Activated CD4-positive, alpha-beta T cell treated with anti-CD3 and anti-CD28 coated beads, Interleukin-2, amount 10 ng/mL, durations not matched to agents 24 days and 14 days (primary cell): ENCODE measurements at regions of chr16 and their contacts with region 1.

Region 1: GRCh38 chr16:68510775-68511174 is 28.3 kb upstream of the ZFP90 start:
- DNase-seq: no peak
- H3K4me3 Mint-ChIP-seq: no peak overlapping the region
- H3K27ac Mint-ChIP-seq: no peak overlapping the region
- H3K4me1 Mint-ChIP-seq: peaks cover 2% of the 10 kb centered on the region
- H3K27me3 Mint-ChIP-seq: peaks cover 30% of the 10 kb centered on the region

Region 2: GRCh38 chr16:68396481-68396880 is 114.3 kb before region 1 on chr16:
- intact Hi-C with region 1: loop called (anchors 1 kb)
- DNase-seq: peak; percentile 87
- H3K4me3 Mint-ChIP-seq: no peak overlapping the region
- H3K27ac Mint-ChIP-seq: no peak overlapping the region
- H3K4me1 Mint-ChIP-seq: peaks cover 16% of the 10 kb centered on the region
- H3K27me3 Mint-ChIP-seq: peaks cover 20% of the 10 kb centered on the region

Region 3: DNA sequence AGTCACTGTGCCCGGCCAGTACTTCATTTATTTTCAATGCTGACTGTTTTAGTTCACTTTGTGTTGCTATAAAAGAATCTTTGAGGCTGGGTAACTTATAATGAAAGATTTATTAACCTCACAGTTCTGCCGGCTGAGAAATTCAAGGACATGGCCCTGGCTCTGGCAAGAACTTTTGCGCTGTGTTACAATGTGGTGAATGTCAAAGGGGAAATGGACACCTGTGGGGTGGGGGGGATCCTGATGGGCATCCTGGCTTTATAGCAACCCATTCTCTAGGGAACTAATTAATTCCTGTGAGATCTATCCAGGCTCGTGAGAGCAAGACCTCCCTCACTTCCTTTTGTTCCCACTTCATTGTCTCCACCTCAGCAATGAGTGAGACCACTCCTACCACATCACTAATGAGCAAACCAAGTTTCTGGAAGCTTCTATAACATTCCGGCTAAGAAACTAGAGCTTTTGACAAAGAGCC is 117.2 kb after region 1 on chr16:
- intact Hi-C with region 1: no loop called
- DNase-seq: no peak
- H3K4me3 Mint-ChIP-seq: no peak overlapping the region
- H3K27ac Mint-ChIP-seq: no peak overlapping the region
- H3K4me1 Mint-ChIP-seq: no peaks in the 10 kb centered on the region
- H3K27me3 Mint-ChIP-seq: no peaks in the 10 kb centered on the region